ENCODE measurements at regions of chr17 and their contacts with region 1.

Region 1: GRCh38 chr17:55527540-55528118 is 16.4 kb upstream of the SMIM36 start:
- DNase-seq: peak in 1 of 2 experiments; percentile 50
- H3K4me3 ChIP-seq: no peak overlapping the region
- H3K27ac ChIP-seq: no peak overlapping the region
- H3K4me1 ChIP-seq: peaks cover 0 to 2% (median 0%) of the 10 kb centered on the region in 4 experiments; a peak in 1 of 7 replicates
- H3K27me3 ChIP-seq: no peaks in the 10 kb centered on the region
- CTCF ChIP-seq: peak in 2 of 3 experiments; percentile 67 to 68; a peak in 3 of 4 replicates
- EP300 ChIP-seq: no peak
- POLR2A ChIP-seq: no peak
- RAD21 ChIP-seq: peak; percentile 88 to 89

Region 2: DNA sequence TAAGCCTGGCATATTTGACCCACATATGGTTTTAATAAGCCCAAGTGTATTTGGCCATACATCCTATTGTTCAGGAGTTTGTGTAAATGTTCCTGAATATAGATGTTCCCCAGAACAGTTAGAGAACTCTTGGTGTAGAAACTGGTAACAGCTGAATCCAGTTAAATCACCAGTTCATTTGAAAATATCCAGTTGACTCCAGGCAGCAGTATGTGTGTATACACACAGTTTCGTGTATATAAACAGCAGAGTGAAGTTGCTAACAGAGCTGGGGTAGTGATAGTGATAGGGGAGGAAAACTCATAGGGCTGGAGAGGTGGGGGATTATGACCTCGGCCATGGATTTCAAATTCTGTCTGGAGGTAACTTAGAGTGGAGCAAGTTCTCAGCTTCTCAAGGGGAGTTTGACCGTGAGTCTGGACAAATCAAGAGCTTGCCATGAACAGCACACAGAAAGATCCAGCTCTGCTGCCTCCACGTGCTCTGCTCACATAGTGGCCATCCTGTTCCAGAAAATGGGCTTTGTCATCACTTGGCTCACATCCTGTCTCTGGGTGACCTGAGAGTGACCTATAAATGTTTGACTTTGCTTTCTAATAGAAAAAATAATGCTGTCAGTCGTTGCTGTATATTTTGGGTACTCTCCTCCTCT is 75.4 kb before region 1 on chr17:
- CTCF ChIA-PET with region 1: no interaction called
- POLR2A ChIA-PET with region 1: no interaction called
- DNase-seq: no peak
- H3K4me3 ChIP-seq: no peak overlapping the region
- H3K27ac ChIP-seq: no peak overlapping the region
- H3K4me1 ChIP-seq: peaks cover 1 to 5% (median 4%) of the 10 kb centered on the region in 4 experiments; a peak in 3 of 7 replicates
- H3K27me3 ChIP-seq: no peaks in the 10 kb centered on the region
- CTCF ChIP-seq: no peak
- EP300 ChIP-seq: no peak
- POLR2A ChIP-seq: no peak
- RAD21 ChIP-seq: no peak

Region 3: DNA sequence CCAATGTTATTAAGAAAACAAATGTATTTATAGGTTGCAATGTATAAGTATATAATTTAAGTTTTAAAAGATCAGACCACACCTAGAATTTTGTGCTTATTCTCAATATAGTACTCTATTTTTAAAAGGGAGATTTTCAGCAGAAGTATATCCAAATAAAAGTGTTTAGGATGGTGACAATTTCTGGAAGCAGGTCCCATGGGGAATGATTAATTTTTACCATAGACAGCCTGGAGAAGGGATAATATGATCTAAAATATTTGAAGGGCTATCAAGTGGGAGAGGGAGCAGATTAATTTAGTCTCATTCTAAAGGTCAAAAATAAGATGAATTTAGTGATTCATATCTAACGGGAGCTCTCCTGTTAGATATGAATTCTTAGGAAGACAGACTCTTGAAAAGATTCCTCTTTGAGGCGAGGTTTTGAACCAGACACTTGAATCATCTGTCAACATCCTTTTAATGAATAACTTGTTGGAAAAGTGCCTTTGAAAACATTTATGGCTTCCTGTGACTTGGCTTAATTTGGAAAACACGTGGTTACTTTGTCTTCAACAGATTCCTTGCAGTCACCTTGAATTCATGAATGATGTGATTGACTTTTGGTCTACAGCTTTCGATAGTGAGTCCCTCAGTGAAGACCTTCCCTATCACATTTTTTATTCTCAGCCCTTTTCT is 12.9 kb after region 1 on chr17:
- CTCF ChIA-PET with region 1: interaction called, 22 read pairs
- POLR2A ChIA-PET with region 1: no interaction called
- DNase-seq: no peak
- H3K4me3 ChIP-seq: no peak overlapping the region
- H3K27ac ChIP-seq: no peak overlapping the region
- H3K4me1 ChIP-seq: no peaks in the 10 kb centered on the region
- H3K27me3 ChIP-seq: no peaks in the 10 kb centered on the region
- CTCF ChIP-seq: no peak
- EP300 ChIP-seq: no peak
- POLR2A ChIP-seq: no peak
- RAD21 ChIP-seq: no peak

Region 4: DNA sequence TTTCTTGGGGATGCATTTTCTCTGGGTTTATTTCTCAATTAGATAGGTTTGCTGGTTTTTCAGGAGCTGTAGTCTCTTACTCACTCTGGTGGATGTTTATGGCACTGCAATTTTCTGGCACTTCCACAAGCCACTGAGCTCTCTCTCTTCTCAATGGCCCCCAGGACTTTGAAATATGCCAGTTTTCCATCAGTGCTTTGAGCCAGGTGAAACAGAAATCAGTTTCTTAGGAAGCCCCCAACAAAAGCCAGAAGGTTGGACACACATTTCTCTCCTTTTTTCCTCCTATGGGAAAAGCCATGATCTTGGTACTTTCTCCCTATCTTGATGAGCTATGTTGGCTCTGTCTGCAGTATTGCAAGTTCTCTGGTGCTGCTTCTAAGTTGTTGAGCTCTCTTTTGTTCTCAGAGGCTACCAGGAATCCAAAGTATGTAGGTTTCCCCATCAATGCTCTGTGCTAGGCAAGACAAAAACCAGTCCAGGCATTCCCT is 74.3 kb after region 1 on chr17:
- CTCF ChIA-PET with region 1: interaction called, 79 read pairs
- POLR2A ChIA-PET with region 1: no interaction called
- DNase-seq: peak; percentile 21 to 58
- H3K4me3 ChIP-seq: peak overlapping the region in 1 of 4 experiments; percentile 37; a peak in 1 of 8 replicates
- H3K27ac ChIP-seq: no peak overlapping the region
- H3K4me1 ChIP-seq: peaks cover 0 to 3% (median under 1%) of the 10 kb centered on the region in 4 experiments; a peak in 3 of 7 replicates
- H3K27me3 ChIP-seq: no peaks in the 10 kb centered on the region
- CTCF ChIP-seq: peak in 2 of 3 experiments; percentile 72 to 78; a peak in 3 of 4 replicates
- EP300 ChIP-seq: no peak
- POLR2A ChIP-seq: no peak; a peak in 1 of 3 replicates
- RAD21 ChIP-seq: peak; percentile 77 to 83

Region 5: GRCh38 chr17:55735731-55736405 is 208.2 kb after region 1 on chr17:
- CTCF ChIA-PET with region 1: interaction called, 32 read pairs
- POLR2A ChIA-PET with region 1: no interaction called
- DNase-seq: no peak
- H3K4me3 ChIP-seq: no peak overlapping the region
- H3K27ac ChIP-seq: no peak overlapping the region
- H3K4me1 ChIP-seq: peaks cover 1 to 16% (median 15%) of the 10 kb centered on the region in 4 experiments; a peak in 4 of 7 replicates
- H3K27me3 ChIP-seq: no peaks in the 10 kb centered on the region
- CTCF ChIP-seq: peak in 2 of 3 experiments; percentile 64 to 72; a peak in 3 of 4 replicates
- EP300 ChIP-seq: no peak
- POLR2A ChIP-seq: no peak
- RAD21 ChIP-seq: peak; percentile 46 to 57

Region 6: DNA sequence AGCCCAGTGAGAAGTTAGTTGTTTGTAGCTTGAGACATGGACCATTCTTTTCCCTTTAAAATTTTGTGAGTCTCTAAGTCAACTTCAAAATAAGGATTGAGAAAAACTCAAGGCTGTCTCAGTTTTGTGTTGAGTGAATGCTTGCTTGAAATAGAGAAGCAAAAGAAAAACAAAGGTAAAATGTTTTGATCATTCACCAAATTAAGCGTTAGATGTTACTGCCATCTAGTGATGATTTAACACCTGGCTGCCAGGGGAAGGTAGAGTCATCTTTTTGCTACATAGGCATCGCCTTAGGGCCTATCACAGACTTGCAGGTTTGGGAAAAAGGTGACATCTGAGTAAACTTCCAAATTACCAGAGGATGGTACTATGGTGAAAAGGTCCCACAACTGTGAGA is 297.6 kb after region 1 on chr17:
- CTCF ChIA-PET with region 1: interaction called, 63 read pairs
- POLR2A ChIA-PET with region 1: no interaction called
- DNase-seq: no peak
- H3K4me3 ChIP-seq: no peak overlapping the region
- H3K27ac ChIP-seq: no peak overlapping the region
- H3K4me1 ChIP-seq: no peaks in the 10 kb centered on the region
- H3K27me3 ChIP-seq: no peaks in the 10 kb centered on the region
- CTCF ChIP-seq: peak in 2 of 3 experiments; percentile 36 to 69; a peak in 2 of 4 replicates
- EP300 ChIP-seq: no peak
- POLR2A ChIP-seq: no peak
- RAD21 ChIP-seq: peak; percentile 74 to 78

Measured in H1 (cell line).